K562 (cell line): ENCODE measurements at regions of chr5 and their contacts with region 1.

Region 1: DNA sequence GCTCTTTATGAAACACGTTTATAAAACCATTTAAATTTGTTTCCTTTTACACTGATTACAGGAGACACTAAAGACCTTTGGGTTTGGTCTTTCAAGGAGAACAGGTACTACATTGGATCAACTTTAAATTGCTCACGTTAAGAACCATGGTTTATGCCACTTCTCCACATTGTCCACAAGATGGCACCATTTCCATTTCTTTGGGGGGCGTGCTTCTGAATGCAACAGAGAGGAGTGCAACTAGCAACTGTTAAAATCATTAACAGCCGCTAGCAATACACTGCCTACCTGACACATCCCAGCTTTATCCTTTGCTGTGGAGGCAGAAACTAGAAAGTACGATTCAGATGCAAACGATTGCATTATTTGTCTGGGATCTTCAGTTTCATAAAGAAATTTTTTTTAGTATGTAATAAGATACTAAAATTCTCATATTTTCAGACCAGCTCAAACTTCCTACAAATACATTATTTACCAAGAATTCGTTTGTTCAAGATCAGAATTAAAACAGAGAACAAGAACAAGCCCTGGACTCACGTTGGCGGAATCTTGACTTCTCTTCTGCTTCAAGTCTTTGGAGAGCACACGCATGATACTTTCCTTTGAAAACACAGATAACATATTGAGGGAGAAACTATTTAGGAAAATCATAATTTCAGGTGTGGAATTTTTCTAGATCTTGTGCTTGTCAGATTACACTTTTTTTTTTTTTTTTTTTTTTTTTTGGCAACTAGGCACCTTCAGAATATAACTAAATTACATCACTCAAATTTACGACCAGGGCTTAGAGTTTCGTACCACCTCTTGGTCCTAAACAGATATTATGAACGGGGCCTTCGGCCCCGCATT is 702 bp downstream of the CDC20B start:
- DNase-seq: peak; percentile 73 to 86 (median 76)
- ATAC-seq: peak; percentile 74
- H3K4me3 ChIP-seq: peak overlapping the region; percentile 46
- H3K27ac ChIP-seq: no peak overlapping the region
- H3K4me1 ChIP-seq: peaks cover 11 to 22% of the 10 kb centered on the region in 2 experiments
- H3K27me3 ChIP-seq: peaks cover 0 to 2% of the 10 kb centered on the region in 2 experiments; a peak in 3 of 5 replicates
- CTCF ChIP-seq: peak; percentile 75 to 91 (median 81)
- EP300 ChIP-seq: no peak
- POLR2A ChIP-seq: no peak
- RAD21 ChIP-seq: peak; percentile 93 to 94

Region 2: DNA sequence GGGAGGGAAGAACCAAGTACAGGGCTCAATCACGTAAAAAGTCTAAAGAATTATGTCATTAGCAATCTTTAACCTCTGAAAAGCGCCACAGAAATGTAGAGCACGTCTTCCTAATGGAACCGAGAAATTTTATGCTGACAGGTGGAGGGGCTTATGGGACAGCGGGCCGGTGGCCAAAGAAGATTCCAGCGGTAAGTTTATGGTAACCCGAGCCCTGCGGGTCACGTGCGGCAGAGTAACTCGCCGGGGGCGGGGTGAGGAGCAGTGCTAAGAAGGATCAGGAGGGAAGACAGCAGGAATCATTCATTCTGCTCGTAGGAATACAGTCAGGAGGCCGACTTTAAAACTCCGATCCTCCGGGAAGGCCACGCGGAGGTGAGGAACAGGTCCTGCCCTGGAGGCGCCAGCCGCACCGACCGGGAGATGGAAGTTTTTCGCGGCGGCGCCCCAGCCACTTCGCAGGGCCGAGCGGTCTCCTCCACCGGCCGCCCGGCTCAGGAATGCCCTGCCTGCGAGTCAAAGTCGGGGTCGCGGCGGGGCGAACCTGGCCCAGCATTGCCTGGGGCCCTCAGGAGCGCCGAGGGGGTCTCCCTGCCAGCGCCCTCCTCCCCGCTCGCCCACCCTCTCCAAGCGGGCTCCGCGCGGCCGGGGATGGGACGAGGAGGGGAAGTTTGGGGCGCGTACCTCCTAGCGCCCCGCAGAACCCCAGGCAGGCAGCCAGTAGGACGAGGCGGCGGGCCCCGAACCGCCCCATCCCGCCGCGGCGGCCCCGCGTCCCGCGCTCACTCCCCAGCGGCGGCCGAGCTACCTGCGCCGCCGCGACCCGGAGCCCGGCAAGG is 288.7 kb before region 1 on chr5:
- CTCF ChIA-PET with region 1: no interaction called
- POLR2A ChIA-PET with region 1: no interaction called
- in situ Hi-C with region 1: no loop called
- intact Hi-C with region 1: no loop called
- DNase-seq: peak; percentile 13 to 24 (median 17)
- ATAC-seq: peak; percentile 81
- H3K4me3 ChIP-seq: no peak overlapping the region
- H3K27ac ChIP-seq: no peak overlapping the region
- H3K4me1 ChIP-seq: peaks cover 0 to 9% of the 10 kb centered on the region in 2 experiments; a peak in 2 of 5 replicates
- H3K27me3 ChIP-seq: peaks cover 23 to 41% of the 10 kb centered on the region in 2 experiments
- CTCF ChIP-seq: no peak
- EP300 ChIP-seq: no peak
- POLR2A ChIP-seq: no peak
- RAD21 ChIP-seq: no peak

Region 3: GRCh38 chr5:55226027-55226933 is 54.0 kb after region 1 on chr5:
- CTCF ChIA-PET with region 1: no interaction called
- POLR2A ChIA-PET with region 1: no interaction called
- in situ Hi-C with region 1: no loop called
- intact Hi-C with region 1: loop called (anchors 5 kb)
- DNase-seq: peak; percentile 83 to 90 (median 88)
- ATAC-seq: peak; percentile 93
- H3K4me3 ChIP-seq: peak overlapping the region; percentile 71
- H3K27ac ChIP-seq: peak overlapping the region; percentile 55; the same call in 1 of the 3 replicates
- H3K4me1 ChIP-seq: peaks cover 6 to 25% of the 10 kb centered on the region in 2 experiments; a peak in 3 of 5 replicates
- H3K27me3 ChIP-seq: peaks cover 9 to 12% of the 10 kb centered on the region in 2 experiments; a peak in 4 of 5 replicates
- CTCF ChIP-seq: peak; percentile 83 to 92 (median 88)
- EP300 ChIP-seq: no peak
- POLR2A ChIP-seq: peak; percentile 53; the same call in 1 of the 2 replicates
- RAD21 ChIP-seq: peak; percentile 51 to 83

Region 4: GRCh38 chr5:55307383-55308253 is 135.3 kb after region 1 on chr5 and contains the starts of genes DHX29 and MTREX:
- CTCF ChIA-PET with region 1: no interaction called
- POLR2A ChIA-PET with region 1: no interaction called
- in situ Hi-C with region 1: no loop called
- intact Hi-C with region 1: loop called (anchors 10 kb)
- DNase-seq: peak; percentile 78 to 93 (median 86)
- ATAC-seq: peak; percentile 88
- H3K4me3 ChIP-seq: peak within 1 kb of the TSS; percentile 82
- H3K27ac ChIP-seq: peak within 1 kb of the TSS; percentile 98
- H3K4me1 ChIP-seq: peaks cover 3 to 15% of the 10 kb centered on the region in 2 experiments; a peak in 4 of 5 replicates
- H3K27me3 ChIP-seq: no peaks in the 10 kb centered on the region
- CTCF ChIP-seq: no peak
- EP300 ChIP-seq: peak; percentile 24; the same call in 1 of the 2 replicates
- POLR2A ChIP-seq: peak; percentile 96
- RAD21 ChIP-seq: no peak
- polyA plus RNA-seq, gene DHX29: 7.5 to 12.6 TPM
- polyA plus RNA-seq, gene MTREX: 52.9 to 101 TPM

Region 5: DNA sequence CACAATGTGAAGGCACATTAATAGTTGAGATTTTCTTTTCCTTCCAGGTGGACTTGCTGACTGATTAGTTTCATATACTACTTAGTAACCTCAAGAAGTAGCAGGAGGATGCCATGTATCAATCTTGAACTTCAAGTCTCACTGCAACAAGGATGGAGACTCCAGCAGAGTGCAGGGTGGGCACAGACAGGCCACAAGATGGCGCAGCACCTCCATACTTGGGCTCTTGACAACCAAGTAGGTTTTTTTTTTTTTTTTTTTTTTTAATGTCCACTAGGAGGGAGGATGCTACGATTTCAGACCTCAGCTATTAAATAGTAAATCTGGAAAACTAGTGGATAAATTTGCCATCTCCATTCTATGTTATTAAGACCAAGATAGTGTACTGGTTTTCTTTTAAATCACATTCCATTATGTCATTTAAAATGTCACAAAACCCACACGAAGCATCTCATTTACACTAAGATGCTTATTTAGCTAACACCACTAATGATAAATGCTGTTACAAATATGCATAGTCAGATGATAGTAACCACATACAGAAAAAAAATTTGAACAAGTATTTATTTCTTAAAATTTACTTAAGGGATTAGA is 763.9 kb after region 1 on chr5:
- CTCF ChIA-PET with region 1: no interaction called
- POLR2A ChIA-PET with region 1: no interaction called
- in situ Hi-C with region 1: no loop called
- intact Hi-C with region 1: loop called (anchors 5 kb)
- DNase-seq: peak; percentile 68 to 86 (median 73)
- ATAC-seq: peak; percentile 96
- H3K4me3 ChIP-seq: no peak overlapping the region
- H3K27ac ChIP-seq: no peak overlapping the region
- H3K4me1 ChIP-seq: no peaks in the 10 kb centered on the region; a peak in 1 of 5 replicates
- H3K27me3 ChIP-seq: no peaks in the 10 kb centered on the region
- CTCF ChIP-seq: peak; percentile 91 to 97 (median 97)
- EP300 ChIP-seq: no peak
- POLR2A ChIP-seq: no peak
- RAD21 ChIP-seq: peak; percentile 87